GM12878 (cell line): ENCODE measurements at regions of chr1 and their contacts with region 1.

Region 1: GRCh38 chr1:89310505-89310904 is 37.8 kb upstream of the GBP5 start:
- DNase-seq: peak; percentile 15
- ATAC-seq: peak; percentile 85
- H3K4me3 ChIP-seq: no peak overlapping the region
- H3K27ac ChIP-seq: 0 out of 2 replicates have a peak overlapping the region, but pooled peaks have one; percentile 4
- H3K4me1 ChIP-seq: peaks cover 12% of the 10 kb centered on the region; the same call in 1 of the 2 replicates
- H3K27me3 ChIP-seq: no peaks in the 10 kb centered on the region
- CTCF ChIP-seq: no peak
- EP300 ChIP-seq: no peak
- POLR2A ChIP-seq: no peak
- RAD21 ChIP-seq: no peak

Region 2: DNA sequence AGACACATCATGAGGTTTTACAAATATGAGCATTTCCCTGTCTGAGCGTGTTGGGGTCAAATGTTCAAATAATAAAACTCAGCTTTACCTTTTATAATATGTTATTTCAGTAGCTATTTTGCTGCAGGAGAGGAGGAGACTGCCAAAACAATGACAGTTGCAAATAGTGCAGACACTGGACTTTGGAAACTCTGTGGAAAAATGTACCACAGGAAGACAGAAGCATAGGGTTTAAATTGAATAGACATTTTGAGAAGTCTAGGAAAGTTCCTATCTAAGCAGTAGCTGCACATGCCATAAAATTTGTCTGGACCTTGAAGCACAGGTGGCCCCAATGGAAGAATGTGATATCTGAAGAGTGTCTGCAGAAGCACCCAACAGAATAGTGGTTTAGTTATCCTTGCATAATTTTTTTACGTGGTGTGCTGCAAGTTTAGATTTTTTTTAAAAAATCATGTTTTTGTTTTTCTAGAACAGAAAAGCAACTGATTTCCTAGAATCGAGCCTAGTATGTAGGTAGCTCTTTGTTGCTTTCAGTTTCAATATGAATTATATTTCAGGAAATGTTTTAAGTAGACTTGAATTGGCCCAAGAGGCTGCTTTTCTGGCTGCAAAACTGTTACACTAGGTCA is 23.8 kb before region 1 on chr1:
- CTCF ChIA-PET with region 1: interaction called, 4 read pairs
- POLR2A ChIA-PET with region 1: no interaction called
- RAD21 ChIA-PET with region 1: no interaction called
- SMC1A ChIA-PET with region 1: interaction called, 16 read pairs
- in situ Hi-C with region 1: no loop called
- intact Hi-C with region 1: no loop called
- DNase-seq: no peak
- ATAC-seq: peak; percentile 89
- H3K4me3 ChIP-seq: peak overlapping the region; percentile 19; the same call in 1 of the 2 replicates
- H3K27ac ChIP-seq: peak overlapping the region; percentile 31; the same call in 1 of the 2 replicates
- H3K4me1 ChIP-seq: peaks cover 11% of the 10 kb centered on the region
- H3K27me3 ChIP-seq: no peaks in the 10 kb centered on the region
- CTCF ChIP-seq: no peak
- EP300 ChIP-seq: no peak
- POLR2A ChIP-seq: no peak
- RAD21 ChIP-seq: no peak

Region 3: GRCh38 chr1:89298461-89298860 is 12.0 kb before region 1 on chr1:
- CTCF ChIA-PET with region 1: no interaction called
- POLR2A ChIA-PET with region 1: interaction called, 3 read pairs
- RAD21 ChIA-PET with region 1: interaction called, 5 read pairs
- SMC1A ChIA-PET with region 1: interaction called, 21 read pairs
- in situ Hi-C with region 1: no loop called
- intact Hi-C with region 1: no loop called
- DNase-seq: no peak
- ATAC-seq: peak; percentile 33; the same call in 2 of the 3 replicates
- H3K4me3 ChIP-seq: no peak overlapping the region
- H3K27ac ChIP-seq: no peak overlapping the region
- H3K4me1 ChIP-seq: peaks cover 5% of the 10 kb centered on the region; the same call in 1 of the 2 replicates
- H3K27me3 ChIP-seq: no peaks in the 10 kb centered on the region
- CTCF ChIP-seq: no peak
- EP300 ChIP-seq: no peak
- POLR2A ChIP-seq: no peak
- RAD21 ChIP-seq: no peak